ENCODE measurements at regions of chr1 and their contacts with region 1.

Region 1: GRCh38 chr1:86704458-86704971 is at the start of gene SH3GLB1:
- DNase-seq: peak; percentile 91 to 93 (median 92)
- H3K4me3 ChIP-seq: peak within 1 kb of the TSS; percentile 60 to 93
- H3K4me3 Mint-ChIP-seq: peak within 1 kb of the TSS; percentile 95 to 99 (median 98)
- H3K27ac ChIP-seq: peak within 1 kb of the TSS; percentile 94
- H3K27ac Mint-ChIP-seq: peak within 1 kb of the TSS; percentile 91 to 99 (median 98)
- H3K4me1 ChIP-seq: peaks cover 50% of the 10 kb centered on the region
- H3K4me1 Mint-ChIP-seq: peaks cover 32 to 66% (median 44%) of the 10 kb centered on the region in 4 donors
- H3K27me3 ChIP-seq: no peaks in the 10 kb centered on the region
- H3K27me3 Mint-ChIP-seq: peaks cover 0 to 3% of the 10 kb centered on the region in 2 donors
- total RNA-seq, gene SH3GLB1: 55.4 to 59.6 TPM

Region 2: GRCh38 chr1:86380257-86380861 is 324.2 kb before region 1 on chr1:
- CTCF ChIA-PET with region 1: interaction called, 6 read pairs
- POLR2A ChIA-PET with region 1: interaction called, 11 read pairs
- intact Hi-C with region 1: no loop called
- DNase-seq: peak in 4 of 5 donors; percentile 49 to 59 (median 54)
- H3K4me3 ChIP-seq: no peak overlapping the region
- H3K4me3 Mint-ChIP-seq: peak overlapping the region in 2 of 8 donors; percentile 38 to 55
- H3K27ac ChIP-seq: no peak overlapping the region
- H3K27ac Mint-ChIP-seq: peak overlapping the region in 3 of 7 donors; percentile 32 to 48 (median 42)
- H3K4me1 ChIP-seq: peaks cover 17% of the 10 kb centered on the region
- H3K4me1 Mint-ChIP-seq: peaks cover 8 to 30% (median 12%) of the 10 kb centered on the region in 4 donors
- H3K27me3 ChIP-seq: no peaks in the 10 kb centered on the region
- H3K27me3 Mint-ChIP-seq: no peaks in the 10 kb centered on the region

Region 3: GRCh38 chr1:86499987-86500593 is 204.4 kb before region 1 on chr1:
- CTCF ChIA-PET with region 1: interaction called, 16 read pairs
- POLR2A ChIA-PET with region 1: interaction called, 9 read pairs
- intact Hi-C with region 1: loop called (anchors 10 kb)
- DNase-seq: peak in 4 of 5 donors; percentile 66 to 72 (median 69)
- H3K4me3 ChIP-seq: no peak overlapping the region
- H3K4me3 Mint-ChIP-seq: no peak overlapping the region
- H3K27ac ChIP-seq: no peak overlapping the region
- H3K27ac Mint-ChIP-seq: peak overlapping the region in 2 of 7 donors; percentile 7 to 37
- H3K4me1 ChIP-seq: no peaks in the 10 kb centered on the region
- H3K4me1 Mint-ChIP-seq: peaks cover 3 to 22% (median 5%) of the 10 kb centered on the region in 4 donors
- H3K27me3 ChIP-seq: no peaks in the 10 kb centered on the region
- H3K27me3 Mint-ChIP-seq: peaks cover 10% of the 10 kb centered on the region in 2 donors

Region 4: DNA sequence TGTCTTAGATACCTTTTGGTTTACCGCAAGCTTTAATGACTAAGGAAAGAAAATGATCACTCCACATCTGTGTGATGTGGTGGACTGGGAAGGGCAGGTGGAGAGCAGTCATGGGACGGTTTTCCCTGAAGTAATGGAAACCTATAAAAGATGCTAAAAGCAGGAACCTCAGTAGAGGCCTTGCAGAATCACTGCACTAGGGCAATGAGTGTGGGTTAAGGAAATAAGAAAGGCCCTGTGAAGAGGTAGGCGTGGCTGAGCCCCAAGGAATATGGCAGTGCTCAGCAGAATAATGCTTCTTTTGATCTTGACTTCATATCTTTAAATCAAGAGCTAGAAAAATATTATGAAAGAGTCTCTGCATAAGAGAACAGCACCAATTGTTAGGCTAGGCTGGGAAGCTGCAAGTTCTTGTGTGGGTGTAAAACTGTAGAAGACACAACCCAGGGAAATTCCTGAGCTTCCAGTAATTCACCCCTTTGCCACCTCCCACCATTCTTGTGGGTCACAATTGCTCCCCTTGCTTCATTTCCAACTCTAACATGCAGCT is 107.7 kb before region 1 on chr1:
- CTCF ChIA-PET with region 1: no interaction called
- POLR2A ChIA-PET with region 1: no interaction called
- intact Hi-C with region 1: no loop called
- DNase-seq: no peak
- H3K4me3 ChIP-seq: no peak overlapping the region
- H3K4me3 Mint-ChIP-seq: no peak overlapping the region
- H3K27ac ChIP-seq: no peak overlapping the region
- H3K27ac Mint-ChIP-seq: no peak overlapping the region
- H3K4me1 ChIP-seq: no peaks in the 10 kb centered on the region
- H3K4me1 Mint-ChIP-seq: no peaks in the 10 kb centered on the region
- H3K27me3 ChIP-seq: no peaks in the 10 kb centered on the region
- H3K27me3 Mint-ChIP-seq: peaks cover 0 to 1% of the 10 kb centered on the region in 2 donors

Region 5: DNA sequence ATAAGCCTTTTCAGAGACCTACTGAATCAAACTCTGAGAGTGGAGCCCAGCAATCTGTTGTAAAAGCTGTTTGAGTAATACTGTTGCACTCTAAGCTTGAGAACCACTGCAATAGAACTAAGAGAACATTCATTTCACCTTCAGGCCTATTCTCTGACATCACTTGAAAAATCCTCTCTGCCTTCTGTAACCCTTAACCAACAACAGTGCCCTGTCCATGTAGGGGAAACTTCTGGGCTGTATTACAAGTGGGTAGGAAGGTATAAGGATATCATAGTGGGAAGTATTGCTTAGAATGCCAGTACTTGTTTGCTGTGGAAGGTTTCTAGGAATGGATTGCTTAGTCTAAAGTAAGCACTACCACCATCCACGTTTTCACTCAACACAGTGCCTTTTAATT is 42.8 kb after region 1 on chr1:
- CTCF ChIA-PET with region 1: interaction called, 31 read pairs
- POLR2A ChIA-PET with region 1: interaction called, 45 read pairs
- intact Hi-C with region 1: no loop called
- DNase-seq: no peak
- H3K4me3 ChIP-seq: no peak overlapping the region
- H3K4me3 Mint-ChIP-seq: no peak overlapping the region
- H3K27ac ChIP-seq: no peak overlapping the region
- H3K27ac Mint-ChIP-seq: peak overlapping the region in 3 of 7 donors; percentile 15 to 38 (median 36)
- H3K4me1 ChIP-seq: no peaks in the 10 kb centered on the region
- H3K4me1 Mint-ChIP-seq: no peaks in the 10 kb centered on the region
- H3K27me3 ChIP-seq: no peaks in the 10 kb centered on the region
- H3K27me3 Mint-ChIP-seq: no peaks in the 10 kb centered on the region

Region 6: DNA sequence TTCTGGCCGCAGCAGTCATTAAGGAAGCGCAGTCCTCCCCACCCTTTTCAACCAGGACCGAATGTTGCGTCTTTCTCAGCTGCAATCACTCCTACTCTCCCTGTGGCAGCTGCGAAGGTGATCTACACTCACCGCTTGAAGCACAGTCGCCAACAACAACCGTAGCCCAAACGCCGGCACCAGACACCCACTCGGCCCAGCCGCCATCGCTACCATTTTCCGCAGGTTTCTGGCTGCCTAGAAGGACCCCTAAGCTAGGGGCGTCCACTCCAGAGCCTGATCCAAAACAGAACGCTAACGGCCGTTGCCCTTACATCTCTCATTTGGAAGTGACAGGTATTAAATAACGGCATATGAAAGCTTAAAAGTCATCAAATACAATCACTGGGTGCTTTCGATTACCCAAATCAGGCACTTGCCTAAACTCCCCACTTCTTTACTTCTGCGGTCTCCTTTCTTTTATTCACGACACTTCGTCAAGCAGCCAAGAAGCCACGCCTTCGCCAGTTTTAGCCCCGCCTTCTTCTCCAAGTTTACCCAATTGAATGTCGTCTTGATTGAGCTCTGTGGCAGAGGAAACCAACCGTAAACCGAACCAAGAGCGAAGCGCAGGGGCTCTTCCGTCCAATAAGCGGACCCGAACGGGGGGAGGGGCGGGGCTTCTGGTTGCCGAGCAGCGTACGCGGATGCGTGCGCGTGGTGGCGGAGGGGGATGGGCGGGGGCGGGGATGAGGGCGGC is 209.6 kb after region 1 on chr1 and contains the start of gene SELENOF:
- CTCF ChIA-PET with region 1: interaction called, 40 read pairs
- POLR2A ChIA-PET with region 1: interaction called, 74 read pairs
- intact Hi-C with region 1: loop called (anchors 1 kb)
- DNase-seq: peak; percentile 98 to 100 (median 99)
- H3K4me3 ChIP-seq: peak within 1 kb of the TSS; percentile 82 to 91
- H3K4me3 Mint-ChIP-seq: no peak within 1 kb of the TSS
- H3K27ac ChIP-seq: peak within 1 kb of the TSS; percentile 81
- H3K27ac Mint-ChIP-seq: peak within 1 kb of the TSS in 1 of 7 donors; percentile 31
- H3K4me1 ChIP-seq: peaks cover 47% of the 10 kb centered on the region
- H3K4me1 Mint-ChIP-seq: peaks cover 29 to 43% (median 41%) of the 10 kb centered on the region in 4 donors
- H3K27me3 ChIP-seq: no peaks in the 10 kb centered on the region
- H3K27me3 Mint-ChIP-seq: no peaks in the 10 kb centered on the region
- total RNA-seq, gene SELENOF: 151 to 169 TPM

Region 7: DNA sequence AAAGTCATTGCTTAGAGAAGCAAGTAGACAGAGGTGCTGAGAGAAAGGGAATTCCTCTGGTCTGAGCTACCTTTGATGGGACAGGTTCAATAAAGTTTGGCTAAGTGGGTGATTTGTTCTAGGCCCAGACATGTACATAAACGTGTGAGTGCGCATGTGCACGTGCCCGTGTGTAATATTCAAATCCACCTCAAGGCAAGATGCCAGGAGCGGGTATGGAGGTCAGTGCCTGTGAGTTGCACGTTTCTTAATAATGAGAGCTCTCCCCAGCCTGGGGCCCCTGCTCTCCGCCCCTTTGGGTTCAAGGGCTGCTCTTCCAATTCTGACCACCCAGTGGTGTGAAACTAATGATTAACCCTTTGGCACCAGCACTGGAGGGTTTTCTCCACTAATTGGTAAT is 570.3 kb after region 1 on chr1:
- CTCF ChIA-PET with region 1: no interaction called
- POLR2A ChIA-PET with region 1: no interaction called
- intact Hi-C with region 1: no loop called
- DNase-seq: no peak
- H3K4me3 ChIP-seq: no peak overlapping the region
- H3K4me3 Mint-ChIP-seq: no peak overlapping the region
- H3K27ac ChIP-seq: no peak overlapping the region
- H3K27ac Mint-ChIP-seq: no peak overlapping the region
- H3K4me1 ChIP-seq: no peaks in the 10 kb centered on the region
- H3K4me1 Mint-ChIP-seq: no peaks in the 10 kb centered on the region
- H3K27me3 ChIP-seq: no peaks in the 10 kb centered on the region
- H3K27me3 Mint-ChIP-seq: peaks cover 7 to 15% of the 10 kb centered on the region in 2 donors

Region 8: DNA sequence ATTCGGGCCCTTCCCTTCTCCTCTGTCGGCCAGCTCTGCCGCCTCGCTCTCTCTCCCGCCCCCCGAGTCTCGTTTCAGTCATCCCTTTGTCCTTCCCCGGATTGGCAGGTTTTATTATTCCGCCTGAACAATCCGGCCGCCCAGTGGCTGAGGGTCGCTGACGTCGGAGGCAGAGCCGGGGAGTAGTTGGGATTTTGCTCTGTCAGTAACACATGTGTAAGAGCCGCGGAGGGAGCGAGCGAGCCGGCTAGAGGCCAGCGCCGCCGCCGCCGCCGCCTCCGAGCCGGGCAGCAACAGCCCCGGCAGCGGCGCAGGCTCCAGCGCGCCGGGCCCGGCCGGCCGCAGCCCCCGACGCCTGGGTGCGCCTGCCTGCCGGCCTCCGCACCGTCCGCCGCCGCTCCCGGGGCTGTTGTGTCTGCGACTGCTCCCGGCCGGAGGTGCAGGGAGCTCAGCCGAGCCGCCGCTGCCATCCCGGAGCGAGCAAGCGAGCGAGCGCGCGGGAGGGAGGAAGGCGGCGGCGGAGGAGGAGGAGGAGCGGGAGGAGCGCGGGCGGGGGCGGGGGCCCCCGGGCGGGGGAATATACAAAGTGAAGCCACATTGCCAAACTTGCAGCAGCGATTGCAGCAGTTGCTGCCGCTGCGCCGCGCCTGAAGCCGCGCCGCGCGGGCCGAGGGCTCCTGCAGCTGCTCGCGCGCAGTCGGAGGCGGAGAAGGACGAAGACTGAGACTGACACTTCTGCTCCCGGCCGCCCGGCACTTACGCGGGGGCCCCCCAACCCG is 623.9 kb after region 1 on chr1 and contains the start of gene LMO4:
- CTCF ChIA-PET with region 1: no interaction called
- POLR2A ChIA-PET with region 1: interaction called, 13 read pairs
- intact Hi-C with region 1: loop called (anchors 10 kb)
- DNase-seq: peak; percentile 80 to 91 (median 82)
- H3K4me3 ChIP-seq: peak within 1 kb of the TSS; percentile 55 to 71
- H3K4me3 Mint-ChIP-seq: peak within 1 kb of the TSS; percentile 96 to 98 (median 97)
- H3K27ac ChIP-seq: peak within 1 kb of the TSS; percentile 69
- H3K27ac Mint-ChIP-seq: peak within 1 kb of the TSS; percentile 91 to 98 (median 95)
- H3K4me1 ChIP-seq: peaks cover 32% of the 10 kb centered on the region
- H3K4me1 Mint-ChIP-seq: peaks cover 26 to 51% (median 36%) of the 10 kb centered on the region in 4 donors
- H3K27me3 ChIP-seq: no peaks in the 10 kb centered on the region
- H3K27me3 Mint-ChIP-seq: peaks cover 0 to 1% of the 10 kb centered on the region in 2 donors
- total RNA-seq, gene LMO4: 25.0 TPM